ENCODE measurements at regions of chr4 and their contacts with region 1.

Region 1: DNA sequence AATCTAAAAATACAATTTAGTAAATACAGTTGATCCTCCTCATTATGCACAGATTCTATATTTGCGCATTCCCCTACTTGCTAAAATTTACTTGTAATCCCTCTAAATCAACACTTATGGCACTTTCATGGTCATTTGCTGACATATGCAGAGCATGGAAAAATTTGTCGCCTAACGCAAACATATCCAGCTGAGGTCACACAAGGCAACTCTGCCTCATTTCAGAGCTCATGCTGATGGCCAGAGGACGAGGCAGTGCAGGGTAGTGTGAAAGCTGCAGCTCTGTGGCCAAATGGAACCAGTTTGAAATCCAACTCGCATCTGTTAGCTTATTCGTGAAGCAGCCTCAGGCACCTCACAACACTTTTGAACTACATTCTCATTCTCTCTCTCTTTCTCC is 39.7 kb upstream of the KLHL2 start:
- DNase-seq: no peak
- H3K4me3 ChIP-seq: no peak overlapping the region
- H3K27ac ChIP-seq: no peak overlapping the region
- H3K4me1 ChIP-seq: no peaks in the 10 kb centered on the region
- H3K27me3 ChIP-seq: no peaks in the 10 kb centered on the region
- CTCF ChIP-seq: no peak
- POLR2A ChIP-seq: no peak

Region 2: GRCh38 chr4:164725066-164725465 is 442.6 kb before region 1 on chr4:
- intact Hi-C with region 1: loop called (anchors 5 kb)
- DNase-seq: no peak
- H3K4me3 ChIP-seq: no peak overlapping the region
- H3K27ac ChIP-seq: no peak overlapping the region
- H3K4me1 ChIP-seq: no peaks in the 10 kb centered on the region
- H3K27me3 ChIP-seq: no peaks in the 10 kb centered on the region
- CTCF ChIP-seq: no peak
- POLR2A ChIP-seq: no peak

Region 3: DNA sequence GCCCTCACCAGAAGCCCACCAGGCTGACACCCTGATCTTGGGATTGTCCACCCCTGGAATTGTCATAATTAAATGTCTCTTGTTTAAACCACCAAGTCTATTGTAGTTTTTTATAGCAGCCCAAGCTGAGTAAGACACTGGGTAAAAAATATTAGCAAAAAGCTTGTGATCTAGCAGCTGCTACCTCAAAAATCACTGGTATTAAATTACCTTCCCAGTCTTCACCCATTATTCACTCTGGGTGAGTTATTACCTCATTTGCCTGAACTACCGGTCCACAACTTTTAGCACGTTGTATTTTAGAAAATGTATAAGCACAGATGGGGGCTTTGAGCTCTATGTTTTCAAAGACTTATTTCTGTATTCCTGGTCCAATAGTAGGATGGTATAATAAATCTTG is 178.2 kb before region 1 on chr4:
- intact Hi-C with region 1: no loop called
- DNase-seq: no peak
- H3K4me3 ChIP-seq: no peak overlapping the region
- H3K27ac ChIP-seq: no peak overlapping the region
- H3K4me1 ChIP-seq: no peaks in the 10 kb centered on the region
- H3K27me3 ChIP-seq: no peaks in the 10 kb centered on the region
- CTCF ChIP-seq: no peak
- POLR2A ChIP-seq: no peak

Region 4: GRCh38 chr4:165635261-165635838 is 467.7 kb after region 1 on chr4:
- intact Hi-C with region 1: loop called (anchors 10 kb)
- DNase-seq: no peak
- H3K4me3 ChIP-seq: no peak overlapping the region
- H3K27ac ChIP-seq: no peak overlapping the region
- H3K4me1 ChIP-seq: no peaks in the 10 kb centered on the region
- H3K27me3 ChIP-seq: no peaks in the 10 kb centered on the region
- CTCF ChIP-seq: no peak
- POLR2A ChIP-seq: no peak

Measured in breast epithelium (tissue), 4 donors.